ENCODE measurements at regions of chr3 and their contacts with region 1.

Region 1: GRCh38 chr3:45499529-45499928 is 95.0 kb upstream of the LIMD1 start:
- DNase-seq: peak in 1 of 5 donors; percentile 61
- H3K4me3 ChIP-seq: no peak overlapping the region
- H3K27ac ChIP-seq: no peak overlapping the region
- H3K4me1 ChIP-seq: peaks cover 0 to 6% (median 4%) of the 10 kb centered on the region in 3 donors
- H3K27me3 ChIP-seq: no peaks in the 10 kb centered on the region
- CTCF ChIP-seq: peak; percentile 39

Region 2: GRCh38 chr3:45224824-45225464 is 274.6 kb before region 1 on chr3:
- intact Hi-C with region 1: loop called (anchors 10 kb)
- DNase-seq: peak; percentile 76 to 92 (median 84)
- H3K4me3 ChIP-seq: peak overlapping the region; percentile 25 to 62 (median 47)
- H3K27ac ChIP-seq: no peak overlapping the region
- H3K4me1 ChIP-seq: peaks cover 0 to 4% (median 0%) of the 10 kb centered on the region in 3 donors
- H3K27me3 ChIP-seq: peaks cover 8% of the 10 kb centered on the region
- CTCF ChIP-seq: peak; percentile 69

Measured in kidney (tissue), 22 donors.